MCF 10A (cell line): ENCODE measurements at regions of chr20 and their contacts with region 1.

Region 1: GRCh38 chr20:21235484-21236445 is 67.4 kb upstream of the XRN2 start:
- DNase-seq: peak; percentile 72
- H3K4me3 Mint-ChIP-seq: no peak overlapping the region
- H3K27ac Mint-ChIP-seq: no peak overlapping the region
- H3K4me1 Mint-ChIP-seq: peaks cover 5% of the 10 kb centered on the region
- H3K27me3 Mint-ChIP-seq: no peaks in the 10 kb centered on the region
- CTCF ChIP-seq: peak; percentile 75

Region 2: DNA sequence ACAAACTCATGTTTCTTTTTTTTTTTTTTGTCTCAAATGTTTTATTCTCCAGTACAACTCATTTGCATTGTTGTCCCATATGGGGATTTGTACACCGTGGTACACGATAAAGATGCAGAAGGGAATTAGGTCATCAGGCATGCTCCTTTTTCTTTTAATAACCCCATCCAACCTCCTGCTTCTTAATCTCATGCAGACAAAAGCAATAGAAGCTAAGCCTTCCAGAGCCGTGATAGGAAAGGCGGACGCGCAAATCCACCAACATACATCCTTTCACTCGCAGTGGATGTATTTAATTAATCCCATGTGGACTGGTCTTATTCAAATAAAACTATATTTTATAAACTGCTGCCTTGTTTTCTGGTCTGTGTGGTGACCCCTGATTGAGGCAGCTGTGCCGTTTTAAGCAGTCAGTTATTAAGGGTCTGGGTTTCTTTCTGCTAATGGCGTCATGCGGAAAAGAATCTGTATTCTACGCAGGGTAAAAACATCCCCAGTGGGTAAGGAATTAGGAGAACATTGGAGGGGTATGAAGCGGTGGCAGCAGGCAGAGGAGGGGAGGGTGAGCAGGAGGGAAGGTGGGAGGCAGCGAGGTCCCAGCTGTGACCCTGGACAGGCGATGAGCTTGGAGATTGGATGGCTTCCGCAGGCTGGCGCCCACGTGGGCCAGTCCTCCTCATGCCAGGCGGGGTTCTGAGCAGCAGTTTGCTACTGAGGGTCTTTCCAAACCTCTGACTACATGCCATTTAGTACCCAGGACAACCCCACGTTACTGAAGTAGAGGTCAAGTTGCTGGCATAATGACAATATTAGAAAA is 302.4 kb before region 1 on chr20:
- CTCF ChIA-PET with region 1: no interaction called
- POLR2A ChIA-PET with region 1: no interaction called
- intact Hi-C with region 1: no loop called
- DNase-seq: no peak
- H3K4me3 Mint-ChIP-seq: no peak overlapping the region
- H3K27ac Mint-ChIP-seq: no peak overlapping the region
- H3K4me1 Mint-ChIP-seq: no peaks in the 10 kb centered on the region
- H3K27me3 Mint-ChIP-seq: peaks cover 26% of the 10 kb centered on the region
- CTCF ChIP-seq: no peak

Region 3: DNA sequence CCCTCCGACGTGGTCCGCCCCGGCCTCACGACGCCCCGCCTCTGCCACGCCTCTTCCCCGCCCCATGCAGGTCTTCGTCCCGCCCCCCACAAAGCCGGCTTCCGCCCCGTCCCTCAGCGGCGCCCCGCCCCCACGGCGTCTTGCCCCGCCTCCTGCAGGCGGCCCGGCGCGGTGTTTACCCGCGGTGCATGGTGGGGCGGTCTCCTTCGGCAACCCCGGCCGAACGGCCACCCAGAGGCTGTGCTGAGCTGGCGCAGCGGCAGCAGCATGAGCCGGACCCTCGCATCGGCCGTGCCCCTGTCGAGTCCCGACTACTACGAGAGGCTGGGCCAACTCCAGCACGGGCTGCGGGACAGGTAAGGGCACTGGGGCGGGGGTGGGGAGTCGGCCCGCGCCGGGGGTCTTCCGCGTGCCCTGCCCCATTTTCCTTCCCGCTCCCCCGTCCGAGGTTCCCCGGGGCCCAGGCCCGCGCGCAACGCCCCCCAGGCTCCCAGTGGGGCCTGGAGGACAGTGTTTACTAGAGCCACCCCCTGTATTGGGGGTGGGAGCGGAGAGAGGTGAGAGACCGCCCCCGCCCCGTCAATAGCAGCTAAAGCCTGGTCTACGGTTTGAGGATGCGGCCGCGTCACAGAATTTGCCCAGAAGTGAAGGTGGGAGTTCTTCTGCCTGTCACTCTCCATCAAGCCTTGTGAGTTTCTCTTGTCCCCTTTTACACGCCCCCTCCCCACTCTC is 109.8 kb before region 1 on chr20 and contains the start of gene KIZ:
- CTCF ChIA-PET with region 1: interaction called, 14 read pairs
- POLR2A ChIA-PET with region 1: interaction called, 5 read pairs
- intact Hi-C with region 1: no loop called
- DNase-seq: peak; percentile 93
- H3K4me3 Mint-ChIP-seq: peak within 1 kb of the TSS; percentile 85
- H3K27ac Mint-ChIP-seq: peak within 1 kb of the TSS; percentile 86
- H3K4me1 Mint-ChIP-seq: peaks cover 9% of the 10 kb centered on the region
- H3K27me3 Mint-ChIP-seq: no peaks in the 10 kb centered on the region
- CTCF ChIP-seq: peak; percentile 31
- total RNA-seq, gene KIZ: 47.2 and 56.1 TPM in 2 replicates

Region 4: GRCh38 chr20:21251278-21251677 is 15.5 kb after region 1 on chr20:
- CTCF ChIA-PET with region 1: interaction called, 59 read pairs
- POLR2A ChIA-PET with region 1: interaction called, 3 read pairs
- intact Hi-C with region 1: no loop called
- DNase-seq: peak; percentile 13
- H3K4me3 Mint-ChIP-seq: no peak overlapping the region
- H3K27ac Mint-ChIP-seq: no peak overlapping the region
- H3K4me1 Mint-ChIP-seq: peaks cover 11% of the 10 kb centered on the region
- H3K27me3 Mint-ChIP-seq: no peaks in the 10 kb centered on the region
- CTCF ChIP-seq: no peak

Region 5: GRCh38 chr20:21339499-21339898 is 103.7 kb after region 1 on chr20:
- CTCF ChIA-PET with region 1: interaction called, 12 read pairs
- POLR2A ChIA-PET with region 1: no interaction called
- intact Hi-C with region 1: no loop called
- DNase-seq: peak; percentile 8
- H3K4me3 Mint-ChIP-seq: no peak overlapping the region
- H3K27ac Mint-ChIP-seq: no peak overlapping the region
- H3K4me1 Mint-ChIP-seq: peaks cover 5% of the 10 kb centered on the region
- H3K27me3 Mint-ChIP-seq: no peaks in the 10 kb centered on the region
- CTCF ChIP-seq: no peak

Region 6: DNA sequence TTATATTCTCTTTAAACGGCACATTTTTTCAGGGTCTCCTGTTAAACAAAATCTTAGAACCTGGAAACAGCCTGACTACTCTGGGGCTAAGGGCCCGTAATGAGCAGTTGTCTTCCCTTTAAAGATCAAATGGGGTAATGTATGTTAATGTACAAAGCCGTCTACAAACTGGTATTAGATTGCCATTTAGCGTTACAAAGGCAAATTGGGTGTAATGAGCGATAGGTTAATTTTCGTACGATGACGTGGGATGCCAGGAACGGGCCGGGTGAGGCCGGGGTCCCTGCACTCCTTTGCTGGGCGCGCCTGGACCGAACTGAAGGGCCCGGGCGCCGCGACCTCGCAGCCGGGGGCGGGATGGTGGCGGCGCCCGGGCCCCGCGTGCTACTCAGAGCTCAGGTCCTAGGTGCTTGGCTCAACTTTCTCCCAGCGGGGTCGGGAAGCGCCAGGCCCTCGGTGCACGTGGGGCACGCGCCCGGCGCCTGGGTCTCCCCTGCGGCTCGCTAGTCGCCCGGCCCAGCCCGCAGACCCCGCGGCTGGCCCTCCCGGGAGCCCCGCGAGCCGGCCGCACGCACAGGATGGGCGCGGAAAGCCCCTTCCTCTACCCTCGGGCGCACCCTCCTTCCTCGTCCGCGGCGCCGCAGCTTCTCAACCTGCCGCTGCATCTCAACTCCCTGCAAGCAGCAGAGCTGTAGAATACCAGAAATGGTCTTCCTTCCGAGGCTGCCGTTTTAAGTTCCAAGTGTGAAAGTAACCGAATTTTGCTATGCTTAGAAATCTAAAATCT is 155.6 kb after region 1 on chr20:
- CTCF ChIA-PET with region 1: interaction called, 14 read pairs
- POLR2A ChIA-PET with region 1: interaction called, 3 read pairs
- intact Hi-C with region 1: no loop called
- DNase-seq: no peak
- H3K4me3 Mint-ChIP-seq: no peak overlapping the region
- H3K27ac Mint-ChIP-seq: no peak overlapping the region
- H3K4me1 Mint-ChIP-seq: no peaks in the 10 kb centered on the region
- H3K27me3 Mint-ChIP-seq: no peaks in the 10 kb centered on the region
- CTCF ChIP-seq: no peak

Region 7: GRCh38 chr20:21571841-21572690 is 336.3 kb after region 1 on chr20:
- CTCF ChIA-PET with region 1: interaction called, 51 read pairs
- POLR2A ChIA-PET with region 1: no interaction called
- intact Hi-C with region 1: loop called (anchors 1 kb)
- DNase-seq: peak; percentile 28
- H3K4me3 Mint-ChIP-seq: no peak overlapping the region
- H3K27ac Mint-ChIP-seq: no peak overlapping the region
- H3K4me1 Mint-ChIP-seq: no peaks in the 10 kb centered on the region
- H3K27me3 Mint-ChIP-seq: peaks cover 34% of the 10 kb centered on the region
- CTCF ChIP-seq: peak; percentile 90